AG04449 (cell line): ENCODE measurements at regions of chr10 and their contacts with region 1.

Region 1: GRCh38 chr10:119199231-119199992 is 8.0 kb upstream of the GRK5 start:
- DNase-seq: peak; percentile 56
- H3K4me3 ChIP-seq: no peak overlapping the region
- CTCF ChIP-seq: peak; percentile 85

Region 2: GRCh38 chr10:119061352-119061751 is 138.1 kb before region 1 on chr10:
- CTCF ChIA-PET with region 1: no interaction called
- POLR2A ChIA-PET with region 1: no interaction called
- DNase-seq: no peak
- H3K4me3 ChIP-seq: no peak overlapping the region
- CTCF ChIP-seq: no peak

Region 3: GRCh38 chr10:119177708-119178371 is 21.6 kb before region 1 on chr10:
- CTCF ChIA-PET with region 1: interaction called, 10 read pairs
- POLR2A ChIA-PET with region 1: no interaction called
- DNase-seq: no peak
- H3K4me3 ChIP-seq: peak overlapping the region; percentile 97
- CTCF ChIP-seq: no peak

Region 4: DNA sequence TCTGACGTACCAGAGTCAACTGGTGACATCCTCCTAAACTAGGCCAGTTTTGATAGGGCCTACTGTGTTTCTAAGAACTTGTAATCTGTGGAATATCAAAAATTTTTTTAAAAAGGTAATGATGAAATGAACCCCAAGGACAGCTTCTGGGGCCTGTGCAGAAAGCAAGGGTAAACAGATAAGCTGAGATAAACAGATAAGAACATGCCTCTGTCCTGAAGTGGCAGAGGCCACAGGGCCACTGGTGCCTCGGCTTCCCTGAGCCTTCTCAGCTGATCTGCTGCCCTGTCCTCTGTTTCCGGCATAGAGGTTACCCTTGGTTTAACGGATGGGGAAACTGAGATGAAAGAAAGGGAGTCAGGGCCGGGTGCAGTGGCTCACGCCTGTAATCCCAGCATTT is 16.8 kb after region 1 on chr10:
- CTCF ChIA-PET with region 1: no interaction called
- POLR2A ChIA-PET with region 1: no interaction called
- DNase-seq: no peak
- H3K4me3 ChIP-seq: no peak overlapping the region
- CTCF ChIP-seq: no peak

Region 5: GRCh38 chr10:119309448-119309770 is 110.0 kb after region 1 on chr10:
- CTCF ChIA-PET with region 1: interaction called, 10 read pairs
- POLR2A ChIA-PET with region 1: no interaction called
- DNase-seq: no peak
- H3K4me3 ChIP-seq: no peak overlapping the region
- CTCF ChIP-seq: no peak

Region 6: GRCh38 chr10:119428789-119429188 is 229.4 kb after region 1 on chr10:
- CTCF ChIA-PET with region 1: interaction called, 354 read pairs
- POLR2A ChIA-PET with region 1: no interaction called
- DNase-seq: peak; percentile 46
- H3K4me3 ChIP-seq: no peak overlapping the region
- CTCF ChIP-seq: peak; percentile 25

Region 7: DNA sequence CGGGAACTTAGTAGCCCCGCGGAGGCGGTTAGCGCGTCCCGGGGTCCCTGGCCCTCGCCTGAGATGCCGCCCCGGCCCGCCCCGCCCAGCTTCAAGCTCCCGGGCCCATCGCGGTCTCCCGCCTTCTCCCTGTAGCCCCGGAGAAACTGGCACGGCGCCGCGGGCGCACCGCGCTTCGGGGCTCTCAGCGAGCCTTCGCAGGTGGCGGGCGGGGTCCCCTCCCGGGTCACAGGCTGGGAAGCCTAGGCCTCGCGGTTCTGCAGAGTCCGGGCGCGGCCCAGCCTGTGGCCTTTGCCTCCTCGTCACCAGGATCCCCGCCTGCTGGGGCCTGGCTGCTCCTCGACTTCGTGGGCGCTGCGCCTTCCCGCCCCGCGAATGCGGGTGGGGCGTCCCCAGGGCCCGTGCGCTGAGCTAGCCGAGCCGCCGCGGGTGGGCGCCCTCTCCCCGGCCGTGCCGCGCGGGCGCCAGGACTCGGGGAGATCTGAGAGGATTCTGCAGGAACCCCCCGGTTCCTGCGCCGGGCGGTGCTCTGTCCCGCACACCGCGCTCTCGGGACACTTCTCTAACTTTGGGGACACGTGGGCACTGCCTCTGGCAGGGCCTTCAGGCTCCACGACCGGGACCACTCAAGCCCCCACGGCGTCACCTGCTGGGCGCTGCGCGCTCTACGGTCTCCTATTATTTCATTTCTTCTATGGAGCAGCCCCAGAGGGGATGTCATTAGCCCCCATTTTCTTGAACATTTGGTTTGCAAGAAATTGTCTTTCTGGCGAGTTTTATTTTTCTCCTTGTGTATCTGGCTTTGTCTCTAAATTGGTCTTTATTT is 343.8 kb after region 1 on chr10:
- CTCF ChIA-PET with region 1: interaction called, 117 read pairs
- POLR2A ChIA-PET with region 1: interaction called, 3 read pairs
- DNase-seq: no peak
- H3K4me3 ChIP-seq: peak overlapping the region; percentile 69
- CTCF ChIP-seq: peak; percentile 51